CD4-positive, alpha-beta T cell (primary cell): ENCODE measurements at regions of chr19 and their contacts with region 1.

Region 1: GRCh38 chr19:45439569-45440254 is 16.0 kb upstream of the ERCC1 start:
- DNase-seq: peak; percentile 74 to 93 (median 82)
- ATAC-seq: peak; percentile 66
- H3K4me3 ChIP-seq: peak overlapping the region; percentile 37
- H3K4me3 Mint-ChIP-seq: peak overlapping the region; percentile 80
- H3K27ac ChIP-seq: peak overlapping the region; percentile 52 to 65
- H3K27ac Mint-ChIP-seq: peak overlapping the region; percentile 63
- H3K4me1 ChIP-seq: peaks cover 40% of the 10 kb centered on the region
- H3K4me1 Mint-ChIP-seq: peaks cover 37% of the 10 kb centered on the region
- H3K27me3 ChIP-seq: no peaks in the 10 kb centered on the region
- H3K27me3 Mint-ChIP-seq: no peaks in the 10 kb centered on the region
- CTCF ChIP-seq: peak; percentile 100

Region 2: GRCh38 chr19:45423589-45424190 is 16.0 kb before region 1 on chr19 and contains the start of gene ERCC1:
- CTCF ChIA-PET with region 1: interaction called, 20 read pairs
- POLR2A ChIA-PET with region 1: no interaction called
- intact Hi-C with region 1: no loop called
- DNase-seq: peak in 7 of 14 experiments; percentile 36 to 87 (median 48)
- ATAC-seq: peak; percentile 58
- H3K4me3 ChIP-seq: peak within 1 kb of the TSS; percentile 90
- H3K4me3 Mint-ChIP-seq: peak within 1 kb of the TSS; percentile 92
- H3K27ac ChIP-seq: peak within 1 kb of the TSS; percentile 54 to 75
- H3K27ac Mint-ChIP-seq: peak within 1 kb of the TSS; percentile 80
- H3K4me1 ChIP-seq: peaks cover 53% of the 10 kb centered on the region
- H3K4me1 Mint-ChIP-seq: peaks cover 48% of the 10 kb centered on the region
- H3K27me3 ChIP-seq: peaks cover 4 to 5% of the 10 kb centered on the region in 2 experiments
- H3K27me3 Mint-ChIP-seq: peaks cover 9% of the 10 kb centered on the region
- CTCF ChIP-seq: no peak
- total RNA-seq, gene ERCC1: 32.5 to 32.6 TPM

Region 3: GRCh38 chr19:45455707-45456499 is 16.2 kb after region 1 on chr19:
- CTCF ChIA-PET with region 1: interaction called, 51 read pairs
- POLR2A ChIA-PET with region 1: interaction called, 3 read pairs
- intact Hi-C with region 1: loop called in 1 of 2 experiments (anchors 2 kb)
- DNase-seq: peak in 11 of 14 experiments; percentile 32 to 93 (median 49)
- ATAC-seq: peak; percentile 32
- H3K4me3 ChIP-seq: no peak overlapping the region
- H3K4me3 Mint-ChIP-seq: peak overlapping the region; percentile 38
- H3K27ac ChIP-seq: no peak overlapping the region
- H3K27ac Mint-ChIP-seq: peak overlapping the region; percentile 70
- H3K4me1 ChIP-seq: peaks cover 37% of the 10 kb centered on the region
- H3K4me1 Mint-ChIP-seq: peaks cover 36% of the 10 kb centered on the region
- H3K27me3 ChIP-seq: peaks cover 0 to 2% of the 10 kb centered on the region in 2 experiments
- H3K27me3 Mint-ChIP-seq: no peaks in the 10 kb centered on the region
- CTCF ChIP-seq: no peak

Region 4: GRCh38 chr19:45478454-45479238 is 38.9 kb after region 1 on chr19:
- CTCF ChIA-PET with region 1: interaction called, 365 read pairs
- POLR2A ChIA-PET with region 1: interaction called, 142 read pairs
- intact Hi-C with region 1: loop called (anchors 1 kb)
- DNase-seq: peak; percentile 79 to 95 (median 86)
- ATAC-seq: peak; percentile 74
- H3K4me3 ChIP-seq: peak overlapping the region; percentile 64
- H3K4me3 Mint-ChIP-seq: peak overlapping the region; percentile 86
- H3K27ac ChIP-seq: peak overlapping the region; percentile 98 to 99
- H3K27ac Mint-ChIP-seq: peak overlapping the region; percentile 99
- H3K4me1 ChIP-seq: peaks cover 37% of the 10 kb centered on the region
- H3K4me1 Mint-ChIP-seq: peaks cover 29% of the 10 kb centered on the region
- H3K27me3 ChIP-seq: peaks cover 0 to under 1% of the 10 kb centered on the region in 2 experiments
- H3K27me3 Mint-ChIP-seq: peaks cover 21% of the 10 kb centered on the region
- CTCF ChIP-seq: peak; percentile 85

Region 5: DNA sequence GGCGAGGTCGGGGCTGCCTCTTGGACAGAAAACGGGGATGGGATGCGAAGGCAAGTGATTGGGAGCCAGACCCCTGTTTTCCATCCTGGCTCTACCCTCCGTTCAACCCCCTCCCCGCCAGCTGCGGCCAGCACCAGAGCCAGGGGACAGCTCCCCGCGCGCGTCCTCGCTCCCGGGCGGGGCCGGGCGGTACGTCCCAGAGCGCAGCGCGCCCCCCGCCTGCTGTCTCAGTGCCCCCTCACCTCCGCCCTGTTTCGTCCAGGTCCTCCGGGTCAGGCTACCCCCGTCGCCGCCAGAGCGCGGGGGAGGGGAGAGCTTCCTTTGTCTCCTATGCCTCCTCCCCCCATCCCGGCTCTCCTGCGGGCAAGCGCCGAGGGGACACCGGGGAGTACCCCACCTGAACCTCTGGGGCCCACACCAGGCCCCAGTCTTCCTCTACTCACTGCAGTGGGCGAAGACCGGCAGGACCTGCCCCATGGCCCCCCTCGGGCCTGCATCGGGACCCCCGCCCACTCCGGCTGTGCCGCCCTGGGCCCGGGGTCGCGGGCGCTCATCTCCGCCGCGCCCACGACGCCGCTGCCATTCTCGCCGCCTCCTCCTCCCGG is 56.7 kb after region 1 on chr19:
- CTCF ChIA-PET with region 1: interaction called, 15 read pairs
- POLR2A ChIA-PET with region 1: interaction called, 11 read pairs
- intact Hi-C with region 1: no loop called
- DNase-seq: peak in 9 of 14 experiments; percentile 28 to 74 (median 50)
- ATAC-seq: peak; percentile 28
- H3K4me3 ChIP-seq: peak overlapping the region; percentile 65
- H3K4me3 Mint-ChIP-seq: peak overlapping the region; percentile 81
- H3K27ac ChIP-seq: no peak overlapping the region
- H3K27ac Mint-ChIP-seq: no peak overlapping the region
- H3K4me1 ChIP-seq: peaks cover 66% of the 10 kb centered on the region
- H3K4me1 Mint-ChIP-seq: peaks cover 43% of the 10 kb centered on the region
- H3K27me3 ChIP-seq: peaks cover 23 to 25% of the 10 kb centered on the region in 2 experiments
- H3K27me3 Mint-ChIP-seq: peaks cover 33% of the 10 kb centered on the region
- CTCF ChIP-seq: no peak

Region 6: DNA sequence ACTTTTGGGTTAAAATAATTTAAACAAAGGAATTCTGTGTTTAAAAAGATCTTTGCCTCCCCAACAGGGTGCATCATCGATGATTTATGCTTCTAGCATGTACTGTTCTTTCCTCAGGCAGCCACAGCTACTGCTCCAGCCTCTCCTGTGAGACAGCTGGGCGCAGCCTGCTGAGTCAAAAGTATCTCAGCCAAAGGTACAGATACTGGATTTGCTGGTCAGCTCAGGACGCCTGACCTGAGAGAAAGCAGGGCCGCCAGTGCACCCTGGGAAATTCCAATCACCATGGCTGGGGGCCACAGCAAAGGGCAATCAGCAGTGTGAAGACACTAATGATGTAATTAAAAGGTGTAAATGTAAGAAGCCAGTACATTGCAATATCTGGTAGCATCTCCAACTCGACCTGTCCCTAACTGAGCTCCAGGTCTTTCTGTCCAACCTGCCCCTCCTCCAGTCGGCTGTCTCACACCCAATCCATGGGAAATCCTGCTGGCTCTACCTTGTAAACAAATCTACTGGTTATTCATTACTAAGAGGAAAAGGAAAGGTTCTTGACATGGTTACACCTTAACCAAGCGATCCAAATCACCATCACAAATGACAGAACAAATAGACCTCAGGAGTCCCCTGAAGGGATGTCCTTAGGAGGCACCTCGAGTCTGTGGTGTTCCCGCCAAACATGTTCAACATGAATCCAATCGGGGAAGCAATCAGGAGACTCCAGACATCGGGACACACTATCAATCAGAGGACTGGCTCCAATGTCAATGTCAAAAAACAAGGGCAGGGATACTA is 137.6 kb after region 1 on chr19:
- CTCF ChIA-PET with region 1: no interaction called
- POLR2A ChIA-PET with region 1: no interaction called
- intact Hi-C with region 1: no loop called
- DNase-seq: no peak
- ATAC-seq: no peak
- H3K4me3 ChIP-seq: no peak overlapping the region
- H3K4me3 Mint-ChIP-seq: no peak overlapping the region
- H3K27ac ChIP-seq: no peak overlapping the region
- H3K27ac Mint-ChIP-seq: no peak overlapping the region
- H3K4me1 ChIP-seq: no peaks in the 10 kb centered on the region
- H3K4me1 Mint-ChIP-seq: peaks cover 11% of the 10 kb centered on the region
- H3K27me3 ChIP-seq: no peaks in the 10 kb centered on the region
- H3K27me3 Mint-ChIP-seq: no peaks in the 10 kb centered on the region
- CTCF ChIP-seq: no peak